AG04449 (cell line): ENCODE measurements at regions of chr16 and their contacts with region 1.

Region 1: GRCh38 chr16:58011652-58012051 is 10.4 kb downstream of the USB1 start:
- DNase-seq: peak; percentile 40
- H3K4me3 ChIP-seq: no peak overlapping the region
- CTCF ChIP-seq: no peak

Region 2: GRCh38 chr16:57906382-57907316 is 105.0 kb before region 1 on chr16:
- CTCF ChIA-PET with region 1: interaction called, 161 read pairs
- POLR2A ChIA-PET with region 1: no interaction called
- DNase-seq: no peak
- H3K4me3 ChIP-seq: no peak overlapping the region
- CTCF ChIP-seq: peak; percentile 47

Region 3: GRCh38 chr16:57981636-57982035 is 30.0 kb before region 1 on chr16:
- CTCF ChIA-PET with region 1: no interaction called
- POLR2A ChIA-PET with region 1: no interaction called
- DNase-seq: no peak
- H3K4me3 ChIP-seq: no peak overlapping the region
- CTCF ChIP-seq: no peak

Region 4: DNA sequence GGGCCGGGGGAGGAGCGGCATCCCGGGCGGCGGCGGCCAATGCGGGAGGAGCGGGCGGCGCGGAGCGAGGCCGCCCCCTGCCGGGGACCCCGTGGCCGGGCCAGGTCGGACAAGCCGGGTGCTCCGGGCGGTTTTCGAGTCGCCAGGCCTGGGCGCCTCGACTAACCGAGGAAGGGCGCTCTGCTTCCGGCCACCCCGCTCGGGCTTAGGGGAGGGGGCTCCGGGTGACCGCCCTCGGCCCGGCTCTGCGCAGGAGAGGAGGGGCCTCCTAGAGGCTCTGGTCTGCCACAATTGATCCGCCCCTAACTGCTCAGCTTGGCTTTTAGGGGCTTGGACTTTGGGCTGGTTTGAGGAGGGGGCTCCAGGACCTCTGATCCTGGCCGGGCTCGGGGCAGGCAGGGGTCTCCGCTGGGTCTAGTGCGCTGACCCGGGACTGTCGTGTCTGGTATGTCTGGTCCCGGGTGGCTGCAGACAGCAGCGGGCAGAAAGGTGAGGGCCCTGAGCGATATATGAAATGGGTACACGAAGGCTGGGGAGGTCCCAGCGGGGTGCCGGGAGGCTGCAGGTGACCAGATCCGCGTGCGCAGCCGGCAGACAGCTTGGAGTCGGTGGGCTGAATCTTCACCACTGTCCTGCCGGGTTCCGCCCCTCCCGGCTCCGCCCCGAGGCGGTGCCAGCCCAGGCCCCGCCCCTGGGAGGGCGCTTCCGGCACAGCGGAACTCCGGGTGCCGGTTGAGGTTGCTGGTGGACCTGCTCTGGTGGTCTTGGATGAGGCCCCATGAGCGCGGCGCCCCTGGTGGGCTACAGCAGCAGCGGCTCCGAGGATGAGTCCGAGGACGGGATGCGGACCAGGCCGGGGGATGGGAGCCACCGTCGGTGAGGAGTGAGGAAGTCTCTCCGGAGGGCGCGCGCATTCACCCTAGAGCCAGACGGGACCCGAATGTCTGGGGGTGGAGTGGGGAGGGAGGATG is 10.7 kb before region 1 on chr16 and contains the start of gene USB1:
- CTCF ChIA-PET with region 1: interaction called, 56 read pairs
- POLR2A ChIA-PET with region 1: no interaction called
- DNase-seq: no peak
- H3K4me3 ChIP-seq: peak within 1 kb of the TSS; percentile 93
- CTCF ChIP-seq: peak; percentile 63

Region 5: GRCh38 chr16:58025351-58026138 is 13.9 kb after region 1 on chr16 and contains the start of gene MMP15:
- CTCF ChIA-PET with region 1: interaction called, 12 read pairs
- POLR2A ChIA-PET with region 1: no interaction called
- DNase-seq: no peak
- H3K4me3 ChIP-seq: peak within 1 kb of the TSS; percentile 60
- CTCF ChIP-seq: no peak

Region 6: DNA sequence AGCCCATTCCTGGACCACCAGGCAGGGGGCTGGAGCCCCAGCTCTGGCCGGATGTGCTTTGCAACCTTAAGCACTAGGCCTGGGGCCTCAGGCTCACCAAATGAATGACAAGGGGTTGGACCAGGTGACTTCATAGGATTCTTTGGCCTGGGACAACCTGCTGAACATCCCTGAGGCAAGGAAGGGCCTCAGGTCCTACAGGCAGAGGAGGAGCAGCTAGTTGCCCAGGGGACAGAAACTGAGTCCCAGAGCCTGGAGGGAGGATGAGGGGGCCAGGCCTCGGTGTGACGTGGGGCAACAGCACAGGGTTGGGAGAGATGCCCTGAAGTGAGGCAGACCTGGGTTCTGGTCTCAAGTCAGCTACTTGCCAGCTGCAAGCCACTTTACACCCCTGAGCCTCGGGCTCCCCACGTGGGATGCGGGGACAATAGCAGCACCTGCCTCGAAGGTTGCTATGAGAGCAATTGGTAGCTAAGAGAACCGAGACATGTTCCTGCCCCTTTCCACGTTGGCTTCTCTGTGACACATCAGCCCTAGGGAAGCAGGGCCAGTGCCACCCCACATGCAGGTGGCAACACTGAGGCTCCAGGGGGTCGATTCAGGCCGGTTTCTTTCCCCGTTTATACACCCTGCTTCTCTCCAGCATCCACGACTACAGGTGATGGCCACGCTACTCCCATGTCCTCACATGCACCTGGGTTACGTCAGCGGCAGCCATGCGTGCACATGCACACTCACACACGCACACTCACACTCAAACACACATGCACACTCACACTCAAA is 75.0 kb after region 1 on chr16:
- CTCF ChIA-PET with region 1: no interaction called
- POLR2A ChIA-PET with region 1: no interaction called
- DNase-seq: no peak
- H3K4me3 ChIP-seq: no peak overlapping the region
- CTCF ChIP-seq: no peak